ENCODE measurements at regions of chr5 and their contacts with region 1.

Region 1: GRCh38 chr5:89421035-89421434 is 538.1 kb upstream of the MEF2C start:
- DNase-seq: peak; percentile 65
- ATAC-seq: peak; percentile 89
- H3K4me3 ChIP-seq: no peak overlapping the region
- H3K27ac ChIP-seq: peak overlapping the region; percentile 67
- H3K4me1 ChIP-seq: peaks cover 9% of the 10 kb centered on the region
- H3K27me3 ChIP-seq: no peaks in the 10 kb centered on the region
- CTCF ChIP-seq: no peak

Region 2: DNA sequence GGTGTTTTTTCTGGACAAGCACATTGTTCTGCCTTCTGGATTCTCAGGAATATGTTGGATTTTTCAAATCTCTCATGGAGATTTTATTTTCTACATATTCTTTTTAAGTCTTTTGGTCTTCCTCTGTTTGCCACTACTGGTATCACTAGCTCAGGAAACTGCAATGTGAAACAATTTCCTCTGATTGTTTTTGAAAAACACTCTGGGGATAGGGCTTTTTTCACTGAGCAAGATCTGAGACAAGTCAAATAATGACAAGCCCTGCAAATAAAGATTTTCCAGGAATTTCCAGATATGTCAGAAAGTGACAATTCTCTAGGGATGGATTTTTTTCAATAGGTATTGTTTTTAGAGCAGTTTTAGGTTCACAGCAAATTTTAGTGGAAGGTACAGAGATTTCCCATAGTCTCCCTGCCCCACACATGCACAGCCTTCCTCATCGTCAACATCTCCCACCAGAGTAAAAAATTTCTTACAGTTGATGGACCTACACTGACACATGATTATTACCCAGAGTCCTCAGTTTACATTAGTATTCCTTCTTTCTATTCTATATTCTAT is 1065.5 kb before region 1 on chr5:
- CTCF ChIA-PET with region 1: no interaction called
- POLR2A ChIA-PET with region 1: no interaction called
- intact Hi-C with region 1: no loop called
- DNase-seq: no peak
- ATAC-seq: no peak
- H3K4me3 ChIP-seq: no peak overlapping the region
- H3K27ac ChIP-seq: no peak overlapping the region
- H3K4me1 ChIP-seq: no peaks in the 10 kb centered on the region
- H3K27me3 ChIP-seq: no peaks in the 10 kb centered on the region
- CTCF ChIP-seq: no peak

Region 3: GRCh38 chr5:89584339-89584956 is 163.4 kb after region 1 on chr5:
- CTCF ChIA-PET with region 1: no interaction called
- POLR2A ChIA-PET with region 1: no interaction called
- intact Hi-C with region 1: loop called (anchors 1 kb)
- DNase-seq: peak; percentile 93
- ATAC-seq: peak; percentile 100
- H3K4me3 ChIP-seq: no peak overlapping the region
- H3K27ac ChIP-seq: peak overlapping the region; percentile 51
- H3K4me1 ChIP-seq: peaks cover 25% of the 10 kb centered on the region
- H3K27me3 ChIP-seq: no peaks in the 10 kb centered on the region
- CTCF ChIP-seq: no peak

Measured in PC-3 (cell line).